GM12878 (cell line): ENCODE measurements at regions of chr15 and their contacts with region 1.

Region 1: DNA sequence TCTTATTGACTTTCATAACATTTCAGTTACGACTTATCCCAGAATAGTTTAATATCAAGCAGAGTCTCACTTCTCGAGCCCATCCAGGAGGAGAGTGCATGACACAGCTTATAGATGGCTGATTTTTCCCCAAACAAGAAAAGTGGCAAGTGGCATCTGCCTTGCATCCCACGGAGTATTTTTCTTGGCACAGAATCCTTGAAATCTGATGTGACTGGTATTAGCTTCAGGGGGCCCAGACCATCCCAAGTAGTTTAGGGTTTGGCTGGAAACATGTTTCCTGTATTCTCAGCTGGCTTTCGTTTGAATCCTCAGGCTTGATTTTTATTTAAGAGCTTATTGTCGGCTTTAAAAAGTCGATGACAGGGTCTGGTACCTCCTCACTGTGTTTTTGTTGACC is 20.7 kb upstream of the FBXL22 start:
- DNase-seq: no peak
- ATAC-seq: no peak
- H3K4me3 ChIP-seq: no peak overlapping the region
- H3K27ac ChIP-seq: no peak overlapping the region
- H3K4me1 ChIP-seq: no peaks in the 10 kb centered on the region
- H3K27me3 ChIP-seq: no peaks in the 10 kb centered on the region
- CTCF ChIP-seq: no peak
- EP300 ChIP-seq: no peak
- POLR2A ChIP-seq: no peak
- RAD21 ChIP-seq: no peak

Region 2: GRCh38 chr15:63560741-63561448 is 15.5 kb before region 1 on chr15:
- CTCF ChIA-PET with region 1: interaction called, 3 read pairs
- POLR2A ChIA-PET with region 1: no interaction called
- RAD21 ChIA-PET with region 1: no interaction called
- SMC1A ChIA-PET with region 1: interaction called, 14 read pairs
- in situ Hi-C with region 1: no loop called
- intact Hi-C with region 1: no loop called
- DNase-seq: no peak
- ATAC-seq: peak; percentile 55
- H3K4me3 ChIP-seq: no peak overlapping the region
- H3K27ac ChIP-seq: no peak overlapping the region
- H3K4me1 ChIP-seq: peaks cover 5% of the 10 kb centered on the region
- H3K27me3 ChIP-seq: no peaks in the 10 kb centered on the region
- CTCF ChIP-seq: no peak
- EP300 ChIP-seq: no peak
- POLR2A ChIP-seq: no peak
- RAD21 ChIP-seq: no peak